ENCODE measurements at regions of chr14 and their contacts with region 1.

Region 1: GRCh38 chr14:30270200-30271161 is 288.5 kb upstream of the G2E3 start:
- DNase-seq: peak; percentile 90
- H3K4me3 Mint-ChIP-seq: peak overlapping the region; percentile 2
- H3K27ac Mint-ChIP-seq: peak overlapping the region; percentile 40
- H3K4me1 Mint-ChIP-seq: peaks cover 20% of the 10 kb centered on the region
- H3K27me3 Mint-ChIP-seq: no peaks in the 10 kb centered on the region
- CTCF ChIP-seq: peak; percentile 80

Region 2: DNA sequence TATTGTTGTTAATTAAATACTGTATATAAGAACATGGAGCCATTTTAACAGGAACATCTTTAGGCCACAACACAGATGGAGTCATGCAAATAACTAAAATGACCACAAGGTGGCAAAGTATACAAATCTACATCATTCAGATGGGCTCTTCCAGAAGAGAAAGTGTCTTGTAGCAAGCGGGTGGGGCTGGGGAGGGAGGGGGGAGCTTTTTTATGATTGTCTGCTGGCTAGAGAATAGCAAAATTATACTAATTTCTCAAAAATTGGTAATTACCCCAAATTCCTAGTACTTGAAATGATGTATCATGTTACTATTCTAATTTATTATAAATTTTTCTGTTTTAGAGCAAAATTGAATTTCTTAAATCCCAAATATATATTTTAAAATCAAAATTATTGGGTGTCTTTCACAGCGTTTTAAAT is 721.5 kb before region 1 on chr14:
- CTCF ChIA-PET with region 1: interaction called, 21 read pairs
- POLR2A ChIA-PET with region 1: no interaction called
- intact Hi-C with region 1: loop called (anchors 5 kb)
- DNase-seq: peak; percentile 64
- H3K4me3 Mint-ChIP-seq: no peak overlapping the region
- H3K27ac Mint-ChIP-seq: no peak overlapping the region
- H3K4me1 Mint-ChIP-seq: no peaks in the 10 kb centered on the region
- H3K27me3 Mint-ChIP-seq: peaks cover 22% of the 10 kb centered on the region
- CTCF ChIP-seq: peak; percentile 40

Region 3: GRCh38 chr14:30005114-30005808 is 265.2 kb before region 1 on chr14:
- CTCF ChIA-PET with region 1: interaction called, 8 read pairs
- POLR2A ChIA-PET with region 1: no interaction called
- intact Hi-C with region 1: loop called (anchors 5 kb)
- DNase-seq: peak; percentile 68
- H3K4me3 Mint-ChIP-seq: no peak overlapping the region
- H3K27ac Mint-ChIP-seq: no peak overlapping the region
- H3K4me1 Mint-ChIP-seq: peaks cover 7% of the 10 kb centered on the region
- H3K27me3 Mint-ChIP-seq: no peaks in the 10 kb centered on the region
- CTCF ChIP-seq: peak; percentile 78

Region 4: DNA sequence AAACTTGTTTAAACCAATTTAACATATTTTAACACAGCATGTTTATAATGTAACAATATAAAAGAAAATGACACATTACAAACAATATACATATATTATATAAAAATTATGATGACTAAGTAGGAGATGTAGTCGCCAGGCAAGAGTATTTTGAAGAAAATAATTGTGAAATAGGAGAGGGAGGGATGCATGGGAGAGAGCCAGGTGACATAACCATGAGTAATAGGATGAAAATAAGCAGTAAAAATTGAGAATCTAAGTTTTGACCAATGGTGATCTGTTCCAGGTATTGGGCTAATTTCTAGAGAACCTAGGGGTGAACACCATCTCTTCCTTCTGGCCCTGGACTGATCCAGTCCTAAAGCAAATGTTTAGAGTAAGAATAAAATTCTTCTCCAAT is 26.7 kb before region 1 on chr14:
- CTCF ChIA-PET with region 1: interaction called, 21 read pairs
- POLR2A ChIA-PET with region 1: interaction called, 3 read pairs
- intact Hi-C with region 1: no loop called
- DNase-seq: peak; percentile 85
- H3K4me3 Mint-ChIP-seq: peak overlapping the region; percentile 24
- H3K27ac Mint-ChIP-seq: peak overlapping the region; percentile 93
- H3K4me1 Mint-ChIP-seq: peaks cover 16% of the 10 kb centered on the region
- H3K27me3 Mint-ChIP-seq: no peaks in the 10 kb centered on the region
- CTCF ChIP-seq: no peak

Region 5: DNA sequence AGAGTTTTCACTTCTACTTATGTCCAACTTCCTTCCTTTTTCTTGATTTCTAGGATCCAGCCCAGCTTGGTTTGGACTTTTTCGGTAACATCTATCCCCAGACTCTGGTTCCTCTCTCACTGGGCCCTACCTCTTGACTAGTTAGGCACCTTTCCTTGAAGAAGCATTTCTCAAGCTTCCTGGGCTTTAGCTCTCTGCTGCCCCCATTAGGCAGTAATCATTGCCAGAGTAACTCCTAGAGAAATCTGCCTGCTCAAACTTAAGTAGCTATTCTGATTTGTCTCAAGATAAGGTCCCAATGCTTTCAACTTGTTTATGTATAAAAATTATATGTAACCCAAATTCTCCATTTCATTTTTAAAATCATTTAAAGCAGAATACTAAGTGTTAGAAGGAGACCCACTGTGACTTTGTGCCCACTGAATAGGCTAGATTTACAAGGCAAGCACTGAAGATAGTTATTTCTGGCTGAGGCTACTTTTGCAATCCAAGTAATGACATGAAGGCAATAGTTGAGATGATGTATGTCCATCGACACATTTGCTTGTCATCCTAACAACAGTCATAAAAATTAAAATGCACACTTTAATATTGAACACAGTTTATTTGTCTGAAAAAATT is 13.5 kb after region 1 on chr14:
- CTCF ChIA-PET with region 1: interaction called, 163 read pairs
- POLR2A ChIA-PET with region 1: interaction called, 5 read pairs
- intact Hi-C with region 1: no loop called
- DNase-seq: peak; percentile 75
- H3K4me3 Mint-ChIP-seq: no peak overlapping the region
- H3K27ac Mint-ChIP-seq: no peak overlapping the region
- H3K4me1 Mint-ChIP-seq: no peaks in the 10 kb centered on the region
- H3K27me3 Mint-ChIP-seq: no peaks in the 10 kb centered on the region
- CTCF ChIP-seq: peak; percentile 73

Region 6: DNA sequence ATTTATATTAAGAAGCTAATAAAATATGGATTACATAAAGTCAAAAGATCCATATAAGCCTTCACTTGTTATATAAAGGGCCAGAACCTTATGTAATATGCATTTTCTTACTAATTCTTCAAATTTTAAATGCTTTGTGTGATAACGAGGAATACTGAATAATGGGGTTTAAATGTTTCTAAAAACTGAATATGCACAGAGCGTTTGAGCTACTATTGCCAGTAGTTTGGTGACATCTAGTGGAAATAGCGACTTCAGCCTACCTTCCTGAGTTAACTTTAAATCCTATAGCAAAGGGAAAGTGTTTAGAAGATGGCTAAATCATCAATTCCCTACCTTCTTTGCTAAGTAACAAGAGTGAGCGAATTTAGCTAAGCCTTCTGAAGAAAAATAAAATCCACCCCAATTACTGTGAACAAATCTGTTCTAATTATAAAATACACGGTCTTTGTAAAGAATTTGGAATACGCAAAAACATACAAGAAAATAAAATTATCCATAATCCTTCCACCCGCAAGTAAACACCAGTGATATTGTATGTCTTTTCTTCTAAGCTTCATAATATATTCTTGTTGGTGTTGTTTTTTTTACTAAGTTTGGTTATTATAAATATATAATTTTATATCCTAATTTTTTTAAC is 173.0 kb after region 1 on chr14:
- CTCF ChIA-PET with region 1: interaction called, 14 read pairs
- POLR2A ChIA-PET with region 1: interaction called, 5 read pairs
- intact Hi-C with region 1: no loop called
- DNase-seq: peak; percentile 56
- H3K4me3 Mint-ChIP-seq: no peak overlapping the region
- H3K27ac Mint-ChIP-seq: no peak overlapping the region
- H3K4me1 Mint-ChIP-seq: no peaks in the 10 kb centered on the region
- H3K27me3 Mint-ChIP-seq: peaks cover 24% of the 10 kb centered on the region
- CTCF ChIP-seq: peak; percentile 57